ENCODE measurements at regions of chr1 and their contacts with region 1.

Region 1: DNA sequence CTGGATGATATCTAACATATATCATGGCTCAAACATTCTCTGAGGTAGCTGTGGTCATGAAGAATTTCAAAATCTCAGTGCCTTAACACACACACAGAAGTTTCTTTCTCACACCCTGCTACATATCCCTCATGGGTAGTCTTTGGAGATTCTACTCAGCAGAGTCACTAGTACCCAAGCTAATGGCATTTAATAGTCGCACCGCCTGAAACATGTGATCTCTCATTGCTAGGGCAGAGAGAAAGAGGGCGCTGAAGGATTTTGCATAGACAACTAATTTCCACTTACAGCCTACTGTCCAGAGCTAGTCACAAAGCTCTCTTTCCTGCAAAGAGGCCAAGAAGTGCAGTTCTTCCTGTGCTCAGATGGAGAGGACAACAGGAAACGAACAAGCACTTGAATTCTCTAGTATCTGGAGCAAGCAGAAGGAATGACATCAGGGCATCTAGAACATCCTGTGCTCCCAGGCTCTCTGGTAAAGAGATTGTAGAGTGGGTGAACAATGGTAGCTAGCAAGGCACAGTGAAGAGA is 183.4 kb upstream of the PTBP2 start:
- DNase-seq: peak in 1 of 2 donors; percentile 65
- H3K4me3 ChIP-seq: peak overlapping the region in 1 of 2 donors; percentile 8
- H3K27ac ChIP-seq: peak overlapping the region; percentile 59 to 76
- H3K4me1 ChIP-seq: peaks cover 0 to 22% of the 10 kb centered on the region in 2 donors
- H3K27me3 ChIP-seq: no peaks in the 10 kb centered on the region
- CTCF ChIP-seq: no peak

Region 2: GRCh38 chr1:96164053-96164906 is 373.9 kb before region 1 on chr1:
- intact Hi-C with region 1: loop called (anchors 5 kb)
- DNase-seq: no peak
- H3K4me3 ChIP-seq: no peak overlapping the region
- H3K27ac ChIP-seq: no peak overlapping the region
- H3K4me1 ChIP-seq: no peaks in the 10 kb centered on the region
- H3K27me3 ChIP-seq: no peaks in the 10 kb centered on the region
- CTCF ChIP-seq: no peak

Region 3: DNA sequence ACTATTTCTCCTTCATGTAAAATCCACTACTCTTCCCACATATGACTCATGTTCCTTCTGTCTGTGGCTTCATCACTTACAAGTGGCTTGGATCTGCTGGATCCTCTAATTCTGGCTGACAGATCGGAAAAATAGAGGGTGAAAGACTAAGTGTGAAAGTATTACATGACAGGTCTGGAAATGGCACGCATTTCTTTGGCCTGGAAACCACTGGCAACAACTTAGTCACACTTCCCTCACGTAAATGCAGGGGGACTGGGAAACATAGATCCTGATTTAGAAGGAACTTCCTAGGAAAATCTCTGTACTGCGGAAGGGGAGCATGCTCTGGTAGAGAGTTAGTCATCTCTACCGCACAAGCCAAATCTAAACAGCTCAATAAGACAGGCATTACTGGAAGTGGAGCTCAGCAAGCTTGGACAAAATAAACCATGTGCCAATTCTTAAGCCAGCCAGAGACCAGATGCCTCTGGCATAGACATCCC is 122.0 kb before region 1 on chr1:
- intact Hi-C with region 1: loop called (anchors 10 kb)
- DNase-seq: peak in 1 of 2 donors; percentile 87
- H3K4me3 ChIP-seq: no peak overlapping the region
- H3K27ac ChIP-seq: peak overlapping the region; percentile 47 to 57
- H3K4me1 ChIP-seq: peaks cover 0 to 5% of the 10 kb centered on the region in 2 donors
- H3K27me3 ChIP-seq: no peaks in the 10 kb centered on the region
- CTCF ChIP-seq: no peak

Region 4: GRCh38 chr1:96498744-96499340 is 39.3 kb before region 1 on chr1:
- intact Hi-C with region 1: no loop called
- DNase-seq: no peak
- H3K4me3 ChIP-seq: no peak overlapping the region
- H3K27ac ChIP-seq: no peak overlapping the region
- H3K4me1 ChIP-seq: no peaks in the 10 kb centered on the region
- H3K27me3 ChIP-seq: no peaks in the 10 kb centered on the region
- CTCF ChIP-seq: no peak

Region 5: DNA sequence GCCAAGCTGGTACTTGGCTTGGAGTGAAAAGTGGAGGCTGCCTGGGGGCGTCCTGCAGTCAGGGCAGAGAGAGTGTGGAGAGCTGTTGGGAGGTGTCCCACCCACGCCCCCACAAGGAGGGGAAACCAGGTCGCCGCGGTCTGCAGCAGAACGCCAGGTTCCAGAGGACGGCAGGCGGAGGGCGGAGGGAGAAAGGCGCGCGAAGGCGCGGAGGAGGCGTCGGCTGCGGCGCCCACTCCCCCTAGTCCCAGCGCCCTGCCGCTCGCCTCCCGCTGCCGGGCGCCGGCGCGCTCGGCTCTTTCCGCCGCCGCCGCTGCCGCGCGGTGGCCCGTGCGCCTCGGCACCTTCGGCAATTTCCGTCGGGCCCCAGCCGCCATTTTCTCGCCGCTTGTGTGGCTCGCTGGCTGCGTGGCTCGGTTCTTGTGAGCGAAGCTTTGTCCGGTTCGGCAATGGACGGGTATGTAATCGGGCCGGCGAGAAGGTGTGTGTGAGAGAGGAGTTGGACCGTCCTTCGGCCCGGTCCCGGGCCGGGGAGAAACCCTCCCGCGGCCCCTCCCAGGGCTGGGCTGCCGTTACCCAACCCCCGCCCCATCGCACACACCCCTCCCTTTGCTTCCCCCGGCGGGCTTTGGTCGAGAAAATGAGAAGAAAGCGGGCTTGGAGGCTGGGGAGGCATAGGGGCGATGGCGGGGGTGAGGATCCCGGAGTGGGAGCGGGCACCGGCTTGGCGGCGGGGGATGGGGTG is 183.4 kb after region 1 on chr1 and contains the start of gene PTBP2:
- intact Hi-C with region 1: loop called (anchors 5 kb)
- DNase-seq: peak; percentile 14 to 83
- H3K4me3 ChIP-seq: peak within 1 kb of the TSS; percentile 68 to 88
- H3K27ac ChIP-seq: peak within 1 kb of the TSS; percentile 91 to 97
- H3K4me1 ChIP-seq: peaks cover 0 to 10% of the 10 kb centered on the region in 2 donors
- H3K27me3 ChIP-seq: no peaks in the 10 kb centered on the region
- CTCF ChIP-seq: no peak
- total RNA-seq, gene PTBP2: 95.9 TPM

Measured in ascending aorta (tissue), 2 donors.